ENCODE measurements at regions of chr15 and their contacts with region 1.

Region 1: DNA sequence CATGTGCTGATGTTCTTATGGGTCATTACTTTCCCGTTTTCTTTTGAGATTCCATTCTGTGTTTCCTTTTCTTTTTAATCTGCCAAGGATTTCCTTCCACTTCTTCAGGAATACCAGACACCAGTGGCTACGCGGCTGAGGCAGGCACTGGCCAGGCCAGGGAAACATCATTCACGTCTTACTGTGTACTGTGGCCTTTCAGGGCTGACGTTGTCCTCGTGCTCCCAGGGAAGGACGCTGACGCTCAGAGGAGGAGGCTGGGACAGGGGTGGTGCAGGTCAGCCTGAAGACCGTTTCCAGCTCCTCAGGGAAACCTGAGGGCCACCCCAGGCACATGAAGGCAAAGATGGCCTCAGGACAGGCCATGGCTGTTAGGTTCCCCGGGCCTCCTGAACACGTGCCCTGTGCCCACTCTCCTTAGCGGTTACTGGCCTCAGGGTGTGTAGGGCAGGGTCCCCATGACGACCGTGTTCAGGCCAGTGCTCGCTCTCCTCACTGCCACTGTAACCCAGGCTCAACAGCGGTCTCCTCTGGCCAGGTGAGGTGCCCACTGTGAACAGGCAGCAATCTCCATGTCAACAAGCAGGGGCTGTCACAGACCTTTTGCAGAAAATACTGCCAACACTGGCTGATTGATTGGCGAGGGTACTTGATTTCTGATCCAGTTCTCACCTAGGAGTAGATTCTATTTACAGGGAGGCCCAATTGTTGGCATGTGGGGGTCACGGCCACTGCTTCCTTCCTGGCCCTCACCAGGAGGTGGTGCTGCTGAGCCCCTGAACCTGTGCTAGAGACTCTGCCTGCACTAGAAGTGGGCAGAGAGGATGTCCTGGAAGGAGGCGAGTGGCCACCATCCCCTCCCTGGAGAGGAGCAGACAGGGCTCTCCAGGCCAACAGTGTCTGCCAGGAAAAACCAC is 169.5 kb downstream of the ATP10A start:
- DNase-seq: peak; percentile 40
- ATAC-seq: peak; percentile 74
- H3K4me3 Mint-ChIP-seq: no peak overlapping the region
- H3K27ac Mint-ChIP-seq: no peak overlapping the region
- H3K4me1 Mint-ChIP-seq: no peaks in the 10 kb centered on the region
- H3K27me3 Mint-ChIP-seq: no peaks in the 10 kb centered on the region
- CTCF ChIP-seq: peak; percentile 73

Region 2: DNA sequence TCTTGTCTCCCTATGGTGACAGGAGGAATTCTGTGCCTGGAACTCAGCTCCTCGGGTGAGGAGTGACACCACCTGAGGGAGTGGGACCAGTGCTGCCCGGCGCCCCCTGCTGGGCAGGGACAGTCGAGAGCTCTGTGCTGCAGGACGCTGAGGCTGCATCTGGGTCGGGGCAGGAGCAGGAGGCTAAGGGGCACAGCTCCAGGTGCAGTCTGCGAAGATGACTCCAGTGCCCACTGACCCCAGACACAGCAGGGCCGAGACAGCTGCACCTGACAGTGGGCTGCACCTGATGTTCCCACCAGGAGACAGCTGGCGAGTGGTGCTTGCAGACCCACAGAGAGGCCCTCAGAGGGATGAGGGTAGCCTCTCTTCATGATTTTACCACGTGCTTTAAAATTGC is 16.6 kb after region 1 on chr15:
- CTCF ChIA-PET with region 1: interaction called, 16 read pairs
- POLR2A ChIA-PET with region 1: no interaction called
- intact Hi-C with region 1: no loop called
- DNase-seq: peak; percentile 61
- ATAC-seq: peak; percentile 84
- H3K4me3 Mint-ChIP-seq: no peak overlapping the region
- H3K27ac Mint-ChIP-seq: no peak overlapping the region
- H3K4me1 Mint-ChIP-seq: no peaks in the 10 kb centered on the region
- H3K27me3 Mint-ChIP-seq: no peaks in the 10 kb centered on the region
- CTCF ChIP-seq: peak; percentile 84